Sigmoid colon (tissue), 7 donors: ENCODE measurements at regions of chr10 and their contacts with region 1.

Region 1: DNA sequence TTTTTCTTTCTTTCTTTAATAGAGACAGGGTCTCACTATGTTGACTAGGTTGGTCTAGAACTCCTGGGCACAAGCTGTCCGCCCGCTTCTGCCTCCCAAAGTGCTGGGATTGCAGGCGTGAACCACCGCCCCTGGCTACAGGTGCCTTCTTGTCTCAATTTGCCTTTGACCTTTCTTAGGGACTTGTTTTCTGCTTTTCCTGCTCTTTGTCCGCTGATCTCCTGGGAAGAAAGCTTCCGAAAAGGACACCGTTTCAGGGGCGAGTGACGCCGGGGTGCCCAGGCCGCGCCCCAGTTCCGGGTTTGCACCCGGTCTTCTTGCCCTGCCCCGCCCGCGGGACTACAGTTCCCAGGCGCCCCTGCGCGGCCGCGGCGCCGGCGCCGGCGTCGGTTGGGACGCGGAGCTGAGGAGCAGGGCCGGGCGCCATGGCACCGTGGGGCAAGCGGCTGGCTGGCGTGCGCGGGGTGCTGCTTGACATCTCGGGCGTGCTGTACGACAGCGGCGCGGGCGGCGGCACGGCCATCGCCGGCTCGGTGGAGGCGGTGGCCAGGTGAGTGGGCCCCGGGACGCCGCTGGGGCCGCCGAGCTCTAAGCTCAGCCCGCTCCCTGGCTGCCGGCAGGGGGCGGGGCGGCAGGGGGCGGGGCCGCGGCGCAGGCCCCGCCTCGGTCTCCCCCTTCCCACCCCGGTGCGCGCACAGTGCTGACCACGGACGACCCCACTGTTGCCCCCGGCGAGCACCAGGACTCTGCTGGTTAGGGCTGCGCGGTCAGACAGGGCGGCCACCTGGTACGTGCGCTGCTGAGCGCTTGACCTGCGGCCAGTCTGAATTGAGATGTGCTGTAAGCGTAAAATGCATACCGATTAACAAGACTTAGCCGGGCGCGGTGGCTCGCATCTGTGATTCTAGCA is at the start of gene LHPP:
- DNase-seq: peak; percentile 89
- H3K4me3 ChIP-seq: peak within 1 kb of the TSS; percentile 49 to 82 (median 76)
- H3K27ac ChIP-seq: peak within 1 kb of the TSS; percentile 88 to 94 (median 88)
- H3K4me1 ChIP-seq: peaks cover 0 to 17% (median 10%) of the 10 kb centered on the region in 4 donors
- H3K27me3 ChIP-seq: no peaks in the 10 kb centered on the region
- CTCF ChIP-seq: peak in 2 of 4 experiments; percentile 9 to 58
- EP300 ChIP-seq: no peak
- POLR2A ChIP-seq: no peak
- total RNA-seq, gene LHPP: 17.5 to 35.7 (median 24.9) TPM

Region 2: DNA sequence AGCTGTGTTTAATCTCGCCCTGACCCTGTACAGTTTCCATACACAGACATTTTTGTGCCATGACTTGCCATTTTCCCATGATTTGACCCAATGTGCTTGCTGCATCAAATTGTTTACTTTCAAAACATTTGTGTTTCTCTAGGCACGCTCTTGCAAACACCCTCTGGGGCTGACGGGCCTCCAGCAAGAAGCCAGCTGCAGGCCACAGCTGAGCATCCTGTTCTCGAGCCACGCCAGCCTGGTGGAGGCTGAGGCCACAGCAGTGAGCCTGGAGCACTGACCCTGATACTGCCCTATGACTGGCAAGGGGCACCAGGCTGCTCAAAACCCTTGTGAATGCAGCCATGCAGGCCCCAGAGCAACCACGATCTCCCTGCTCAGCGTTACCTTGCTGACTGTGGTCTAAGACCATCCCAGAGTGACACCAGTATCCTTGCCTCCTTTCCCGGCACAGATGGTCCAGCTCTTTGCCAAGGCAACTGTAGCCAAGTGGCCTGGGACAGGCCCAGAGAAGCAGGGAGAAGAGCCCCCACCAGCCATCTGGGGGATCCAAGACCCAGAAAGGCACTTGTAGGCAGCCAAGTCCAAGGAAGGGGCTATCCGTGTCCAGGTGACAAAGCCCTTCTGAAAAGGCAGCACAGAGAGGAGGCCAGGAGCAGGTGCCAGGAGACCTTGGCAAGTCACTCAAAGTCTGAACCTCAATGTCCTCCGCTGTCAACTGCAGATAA is 121.5 kb before region 1 on chr10:
- intact Hi-C with region 1: no loop called
- DNase-seq: no peak
- H3K4me3 ChIP-seq: no peak overlapping the region
- H3K27ac ChIP-seq: no peak overlapping the region
- H3K4me1 ChIP-seq: no peaks in the 10 kb centered on the region
- H3K27me3 ChIP-seq: no peaks in the 10 kb centered on the region
- CTCF ChIP-seq: no peak
- EP300 ChIP-seq: no peak
- POLR2A ChIP-seq: no peak

Region 3: DNA sequence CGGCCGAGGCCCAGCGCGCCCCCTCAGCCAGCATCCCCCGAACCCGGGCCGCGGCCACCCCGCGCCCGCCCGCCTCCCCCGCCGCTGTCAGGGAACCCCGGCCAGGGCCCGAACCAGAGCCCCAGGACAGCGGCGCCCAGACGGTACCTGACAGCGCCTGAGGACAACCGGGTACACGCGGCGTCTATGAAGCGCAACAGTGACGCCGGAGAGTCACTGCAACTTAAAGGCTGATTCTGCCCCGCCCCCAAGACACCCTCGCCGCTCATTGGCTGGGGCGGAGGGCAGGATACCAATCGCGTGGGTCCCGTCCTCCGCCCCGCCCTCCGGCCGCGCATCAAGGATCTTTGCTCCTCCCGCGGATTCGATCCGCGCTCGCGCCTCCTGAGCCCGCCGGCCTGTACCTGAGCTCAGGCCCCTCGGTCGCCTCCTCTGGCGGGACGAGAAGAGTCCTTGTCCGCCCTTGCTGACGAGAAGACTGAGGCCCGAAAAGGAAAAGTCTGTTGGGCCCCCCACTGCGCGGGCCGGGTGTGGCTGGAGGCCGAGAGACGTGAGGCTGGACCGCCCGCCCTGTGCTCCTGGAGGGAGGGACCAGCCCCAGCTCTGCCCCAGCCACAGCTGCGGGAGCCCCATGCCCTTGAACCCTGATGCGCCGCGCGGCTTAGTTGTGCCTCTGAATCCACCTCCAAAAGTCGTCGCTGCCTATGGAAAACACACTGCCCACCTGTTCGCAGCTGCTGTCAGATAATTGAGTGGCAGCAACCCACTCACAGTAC is 42.8 kb before region 1 on chr10 and contains the start of gene OAT:
- intact Hi-C with region 1: loop called (anchors 5 kb)
- DNase-seq: peak; percentile 99
- H3K4me3 ChIP-seq: peak within 1 kb of the TSS; percentile 87 to 100 (median 100)
- H3K27ac ChIP-seq: peak within 1 kb of the TSS; percentile 98 to 100 (median 100)
- H3K4me1 ChIP-seq: peaks cover 0 to 45% (median 40%) of the 10 kb centered on the region in 4 donors
- H3K27me3 ChIP-seq: no peaks in the 10 kb centered on the region
- CTCF ChIP-seq: no peak
- EP300 ChIP-seq: no peak
- POLR2A ChIP-seq: peak; percentile 94 to 98
- total RNA-seq, gene OAT: 117 to 147 (median 131) TPM

Region 4: GRCh38 chr10:124500757-124501156 is 39.1 kb after region 1 on chr10:
- intact Hi-C with region 1: no loop called
- DNase-seq: no peak
- H3K4me3 ChIP-seq: no peak overlapping the region
- H3K27ac ChIP-seq: no peak overlapping the region
- H3K4me1 ChIP-seq: no peaks in the 10 kb centered on the region
- H3K27me3 ChIP-seq: no peaks in the 10 kb centered on the region
- CTCF ChIP-seq: no peak
- EP300 ChIP-seq: no peak
- POLR2A ChIP-seq: no peak

Region 5: GRCh38 chr10:124983255-124983705 is 521.6 kb after region 1 on chr10:
- intact Hi-C with region 1: no loop called
- DNase-seq: no peak
- H3K4me3 ChIP-seq: no peak overlapping the region
- H3K27ac ChIP-seq: no peak overlapping the region
- H3K4me1 ChIP-seq: peaks cover 0 to 10% (median 5%) of the 10 kb centered on the region in 4 donors
- H3K27me3 ChIP-seq: no peaks in the 10 kb centered on the region
- CTCF ChIP-seq: no peak
- EP300 ChIP-seq: no peak
- POLR2A ChIP-seq: no peak